Activated CD4-positive, alpha-beta T cell treated with anti-CD3 and anti-CD28 coated beads, Interleukin-2, amount 10 ng/mL, durations not matched to agents 24 days and 14 days (primary cell): ENCODE measurements at regions of chr5 and their contacts with region 1.

Region 1: GRCh38 chr5:88666761-88667495 is 216.1 kb downstream of the MEF2C start:
- DNase-seq: peak; percentile 72
- H3K4me3 Mint-ChIP-seq: peak overlapping the region; percentile 86
- H3K27ac Mint-ChIP-seq: no peak overlapping the region
- H3K4me1 Mint-ChIP-seq: peaks cover 23% of the 10 kb centered on the region
- H3K27me3 Mint-ChIP-seq: peaks cover 83% of the 10 kb centered on the region

Region 2: DNA sequence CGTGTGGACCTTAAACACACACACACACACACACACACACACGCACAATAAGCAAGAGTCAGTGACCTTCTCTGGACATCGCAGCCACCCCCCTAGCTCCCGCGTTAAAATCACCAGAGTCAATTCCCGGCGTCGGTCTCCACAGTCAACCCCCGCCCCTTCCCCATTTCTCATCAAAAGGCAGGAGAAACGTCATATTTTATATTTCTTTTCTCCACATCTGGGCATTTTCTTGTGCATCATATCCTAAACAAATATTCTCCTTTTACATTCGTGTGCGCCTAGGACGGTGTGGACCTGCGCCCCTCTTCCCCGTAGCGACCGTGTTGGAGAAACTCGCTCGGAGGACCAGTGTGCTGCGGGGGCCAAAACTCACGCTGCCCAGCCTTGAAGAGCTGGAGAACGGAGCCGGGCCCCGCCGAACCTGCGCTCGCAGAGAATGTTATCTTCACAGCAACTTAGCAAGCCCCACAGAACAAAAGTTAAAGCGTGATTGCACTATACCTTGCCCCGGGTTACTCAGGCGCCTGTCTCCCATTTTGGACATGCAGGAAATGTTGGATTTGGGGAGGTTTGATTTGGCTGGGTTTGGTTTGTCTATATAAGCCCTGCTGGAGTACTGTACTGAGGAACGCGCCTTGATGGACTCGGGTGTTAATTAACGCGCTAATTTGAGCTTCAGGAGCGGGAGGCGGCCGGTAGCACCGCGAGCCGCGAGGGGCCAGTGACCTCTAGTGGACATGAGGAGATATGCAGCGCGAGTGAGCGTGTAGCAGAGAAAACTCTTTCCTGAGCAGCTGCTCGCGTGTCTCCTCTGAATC is 23.7 kb after region 1 on chr5:
- intact Hi-C with region 1: loop called (anchors 1 kb)
- DNase-seq: peak; percentile 89
- H3K4me3 Mint-ChIP-seq: peak overlapping the region; percentile 43
- H3K27ac Mint-ChIP-seq: peak overlapping the region; percentile 88
- H3K4me1 Mint-ChIP-seq: peaks cover 7% of the 10 kb centered on the region
- H3K27me3 Mint-ChIP-seq: peaks cover 91% of the 10 kb centered on the region